ENCODE measurements at regions of chr6 and their contacts with region 1.

Region 1: DNA sequence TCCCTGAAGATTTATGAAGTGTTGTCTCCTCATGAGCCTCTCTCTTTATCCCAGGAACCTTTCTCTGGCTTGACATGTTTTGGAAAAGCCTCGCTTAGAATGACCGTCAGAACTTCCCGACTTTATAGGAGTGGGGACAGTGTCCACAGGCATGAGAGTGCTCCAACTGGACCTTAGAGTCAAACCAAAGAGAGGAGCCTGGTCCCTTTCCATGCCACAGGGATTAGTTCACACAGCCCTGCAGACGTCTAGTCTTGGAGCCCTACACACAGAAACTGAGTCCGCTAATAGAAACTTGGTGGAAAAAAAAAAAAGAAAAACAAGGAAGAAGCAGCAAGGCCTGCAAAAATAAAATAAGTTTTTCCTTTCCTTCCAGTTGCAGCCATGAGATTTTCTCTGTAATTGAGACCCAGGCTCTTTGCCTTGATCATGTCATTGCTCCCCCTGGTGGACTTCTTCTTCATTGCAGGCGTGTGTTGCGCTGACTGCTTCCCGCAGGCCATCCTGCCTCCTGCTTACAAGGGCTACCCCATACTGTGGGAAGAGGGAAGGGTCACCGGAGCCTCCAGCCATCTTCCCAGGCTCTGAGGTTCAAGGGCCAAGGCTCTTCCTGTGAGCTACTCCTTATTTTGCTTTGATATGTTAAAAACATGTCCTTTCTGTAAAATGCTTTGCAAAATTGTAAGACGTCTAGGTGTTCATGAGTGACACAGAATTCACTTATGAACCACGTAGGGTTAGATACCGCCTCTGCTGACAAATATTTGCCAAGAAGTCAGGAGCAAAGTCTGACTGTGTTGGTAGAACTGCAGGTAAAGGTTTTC is 201.0 kb downstream of the UST start:
- DNase-seq: no peak

Region 2: DNA sequence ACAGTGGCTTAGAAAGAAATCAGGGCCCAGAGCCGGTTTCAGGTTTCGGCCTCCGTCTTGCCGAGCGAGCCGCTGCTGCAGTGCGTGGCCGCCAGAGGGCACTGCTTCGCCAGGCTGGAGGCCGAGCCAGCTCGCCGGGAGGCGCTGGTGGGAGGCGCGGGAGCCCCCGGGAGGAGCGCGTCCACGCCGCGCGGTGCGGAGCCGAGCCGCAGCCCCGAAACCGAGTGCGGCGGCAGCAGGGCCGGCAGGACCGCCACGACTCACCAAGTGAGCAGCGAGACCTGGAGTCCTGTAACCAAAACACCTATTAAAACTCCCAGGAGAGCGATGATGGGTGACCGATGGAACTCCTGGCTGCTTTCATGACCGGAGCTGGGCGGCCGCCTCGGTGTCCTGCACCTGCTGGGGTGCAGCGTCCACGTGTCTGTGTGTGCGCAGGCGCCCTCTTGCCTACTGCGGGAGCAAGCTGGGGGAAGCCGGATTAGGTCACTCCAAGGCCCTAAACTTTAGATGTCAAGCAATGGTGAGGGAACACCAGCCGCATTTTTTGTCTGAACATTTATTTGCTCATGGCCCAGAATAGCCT is 387.9 kb before region 1 on chr6:
- intact Hi-C with region 1: loop called (anchors 5 kb)
- DNase-seq: peak; percentile 89

Region 3: GRCh38 chr6:148746363-148747144 is 201.3 kb before region 1 on chr6 and contains the start of gene UST:
- intact Hi-C with region 1: loop called (anchors 2 kb)
- DNase-seq: peak; percentile 85
- total RNA-seq, gene UST: 2.1 TPM